HCT116 (cell line): ENCODE measurements at regions of chr3 and their contacts with region 1.

Region 1: GRCh38 chr3:193655831-193656433 is 62.9 kb downstream of the OPA1 start:
- DNase-seq: no peak
- ATAC-seq: no peak
- H3K4me3 ChIP-seq: no peak overlapping the region
- H3K27ac ChIP-seq: no peak overlapping the region
- H3K4me1 ChIP-seq: no peaks in the 10 kb centered on the region
- H3K27me3 ChIP-seq: no peaks in the 10 kb centered on the region
- CTCF ChIP-seq: no peak
- POLR2A ChIP-seq: no peak
- RAD21 ChIP-seq: no peak

Region 2: DNA sequence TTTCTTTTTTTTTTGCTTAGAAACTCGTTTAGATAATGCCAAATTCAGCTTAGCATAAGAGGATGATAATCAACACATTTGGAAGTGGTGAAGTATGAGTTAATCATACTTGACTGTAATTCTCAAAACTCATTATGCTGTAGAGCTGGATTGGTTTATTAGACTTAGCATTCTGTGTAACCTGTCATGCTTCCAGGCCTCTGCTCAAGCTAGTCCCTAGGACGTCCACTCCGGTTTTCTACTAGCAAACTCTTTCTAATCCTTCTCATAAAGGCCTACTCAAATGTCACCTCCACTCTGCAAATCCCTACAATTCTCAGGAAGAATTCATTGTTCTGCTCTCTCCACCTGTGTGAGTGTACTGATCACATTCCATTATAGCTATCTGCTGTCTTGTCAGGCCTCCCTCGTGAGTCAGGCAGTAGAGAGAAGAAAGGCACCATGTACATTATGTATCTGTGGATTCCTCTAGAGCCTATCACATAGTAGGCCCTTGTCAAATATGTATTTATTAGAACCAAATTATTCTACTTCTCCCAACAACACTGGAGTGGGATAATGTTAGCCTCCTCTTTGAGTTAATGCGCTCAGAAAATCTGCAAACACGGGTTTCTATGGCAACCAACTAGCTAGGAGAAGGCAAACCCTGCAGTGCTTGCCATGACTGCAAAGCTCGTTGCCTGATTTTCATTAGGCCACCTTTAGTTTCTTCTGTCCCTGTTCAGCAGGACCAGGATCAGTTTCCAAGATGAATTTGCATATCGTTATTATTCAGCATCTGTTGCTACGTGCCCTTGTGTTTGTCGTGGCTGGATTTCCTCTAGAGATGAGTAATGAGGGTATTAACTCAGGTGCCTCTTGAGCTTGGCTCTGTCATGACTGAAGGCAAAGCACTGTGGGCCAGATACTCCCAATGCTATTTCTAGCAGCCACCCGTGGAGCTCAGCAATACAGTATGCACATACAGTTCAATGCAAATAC is 308.1 kb before region 1 on chr3:
- CTCF ChIA-PET with region 1: no interaction called
- POLR2A ChIA-PET with region 1: no interaction called
- RAD21 ChIA-PET with region 1: no interaction called
- intact Hi-C with region 1: no loop called
- DNase-seq: no peak
- ATAC-seq: no peak
- H3K4me3 ChIP-seq: no peak overlapping the region
- H3K27ac ChIP-seq: no peak overlapping the region
- H3K4me1 ChIP-seq: no peaks in the 10 kb centered on the region
- H3K27me3 ChIP-seq: peaks cover 31% of the 10 kb centered on the region
- CTCF ChIP-seq: no peak
- POLR2A ChIP-seq: no peak
- RAD21 ChIP-seq: no peak

Region 3: GRCh38 chr3:193637831-193638230 is 18.1 kb before region 1 on chr3:
- CTCF ChIA-PET with region 1: no interaction called
- POLR2A ChIA-PET with region 1: no interaction called
- RAD21 ChIA-PET with region 1: no interaction called
- intact Hi-C with region 1: loop called (anchors 1 kb)
- DNase-seq: no peak
- ATAC-seq: no peak
- H3K4me3 ChIP-seq: no peak overlapping the region
- H3K27ac ChIP-seq: no peak overlapping the region
- H3K4me1 ChIP-seq: no peaks in the 10 kb centered on the region
- H3K27me3 ChIP-seq: no peaks in the 10 kb centered on the region
- CTCF ChIP-seq: no peak
- POLR2A ChIP-seq: no peak
- RAD21 ChIP-seq: no peak